GM12878 (cell line): ENCODE measurements at regions of chr3 and their contacts with region 1.

Region 1: GRCh38 chr3:12193485-12194165 is 34.9 kb upstream of the TIMP4 start:
- DNase-seq: peak; percentile 75
- ATAC-seq: peak; percentile 83
- H3K4me3 ChIP-seq: no peak overlapping the region
- H3K27ac ChIP-seq: peak overlapping the region; percentile 79
- H3K4me1 ChIP-seq: peaks cover 48% of the 10 kb centered on the region
- H3K27me3 ChIP-seq: no peaks in the 10 kb centered on the region
- CTCF ChIP-seq: no peak
- EP300 ChIP-seq: peak; percentile 85 to 91
- POLR2A ChIP-seq: no peak
- RAD21 ChIP-seq: no peak

Region 2: DNA sequence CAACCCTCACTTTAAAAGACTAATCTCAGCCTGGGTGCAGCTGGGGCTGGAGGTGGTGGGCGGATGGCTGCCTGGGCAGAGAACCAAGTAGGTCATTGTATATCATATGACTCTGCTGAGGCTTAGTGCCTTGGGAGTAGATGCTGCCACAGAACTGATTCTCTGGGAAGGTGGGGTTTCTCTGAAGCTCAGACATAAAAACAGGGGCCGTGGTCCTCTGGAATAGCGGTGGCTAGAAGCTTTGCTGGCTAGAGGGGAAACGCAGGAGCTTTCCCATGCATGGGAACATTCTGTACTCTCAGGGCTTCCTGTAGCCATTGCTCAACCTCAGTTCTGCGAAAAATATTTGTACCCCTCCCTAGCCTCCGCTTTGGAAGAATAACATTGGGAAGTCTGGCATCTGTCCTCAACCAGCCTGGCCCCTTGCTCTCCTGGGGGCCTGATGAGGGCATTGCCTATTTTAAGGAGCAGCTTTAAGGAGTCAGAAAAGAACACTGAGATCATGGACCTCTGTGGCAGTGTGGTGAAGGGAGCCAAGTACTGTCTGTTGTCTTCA is 49.6 kb before region 1 on chr3:
- CTCF ChIA-PET with region 1: interaction called, 86 read pairs
- POLR2A ChIA-PET with region 1: no interaction called
- RAD21 ChIA-PET with region 1: interaction called, 16 read pairs
- SMC1A ChIA-PET with region 1: interaction called, 76 read pairs
- in situ Hi-C with region 1: no loop called
- intact Hi-C with region 1: loop called (anchors 2 kb)
- DNase-seq: no peak
- ATAC-seq: no peak
- H3K4me3 ChIP-seq: no peak overlapping the region
- H3K27ac ChIP-seq: no peak overlapping the region
- H3K4me1 ChIP-seq: peaks cover 11% of the 10 kb centered on the region
- H3K27me3 ChIP-seq: no peaks in the 10 kb centered on the region; a peak in 1 of 4 replicates
- CTCF ChIP-seq: no peak
- EP300 ChIP-seq: no peak
- POLR2A ChIP-seq: no peak
- RAD21 ChIP-seq: no peak

Region 3: DNA sequence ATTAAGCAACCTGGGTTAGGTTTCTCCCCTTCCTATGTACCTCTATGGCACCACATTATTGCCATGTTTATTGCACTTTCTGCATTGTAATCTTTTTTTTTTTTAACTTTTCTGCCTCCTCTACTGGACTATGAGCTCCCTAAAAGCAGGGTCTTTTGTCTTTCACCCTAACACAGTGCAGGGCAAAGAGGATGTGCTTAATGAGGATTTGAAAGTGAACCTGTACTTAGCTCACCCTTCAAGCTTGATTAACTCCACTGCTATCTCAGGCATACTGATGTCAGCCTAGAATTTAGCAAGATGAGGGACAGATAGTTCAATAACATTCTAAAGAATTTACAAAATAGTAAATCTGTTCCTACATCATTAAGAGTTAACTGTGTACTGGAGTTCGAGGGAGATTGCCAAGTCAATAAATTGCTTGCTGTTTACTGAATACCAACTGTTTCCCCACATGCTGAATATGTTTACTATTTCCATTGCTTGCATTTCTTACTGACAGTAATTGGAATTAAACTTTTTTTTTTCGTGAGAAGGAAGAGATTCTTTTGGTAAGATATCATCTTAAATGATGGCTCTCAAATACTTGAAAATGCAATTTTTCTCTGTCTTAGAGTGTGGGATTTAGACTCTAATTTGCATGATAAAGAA is 79.5 kb after region 1 on chr3:
- CTCF ChIA-PET with region 1: interaction called, 11 read pairs
- POLR2A ChIA-PET with region 1: no interaction called
- RAD21 ChIA-PET with region 1: no interaction called
- SMC1A ChIA-PET with region 1: interaction called, 10 read pairs
- in situ Hi-C with region 1: no loop called
- intact Hi-C with region 1: loop called (anchors 5 kb)
- DNase-seq: peak; percentile 40
- ATAC-seq: peak; percentile 100
- H3K4me3 ChIP-seq: no peak overlapping the region
- H3K27ac ChIP-seq: no peak overlapping the region
- H3K4me1 ChIP-seq: no peaks in the 10 kb centered on the region
- H3K27me3 ChIP-seq: no peaks in the 10 kb centered on the region
- CTCF ChIP-seq: no peak
- EP300 ChIP-seq: peak in 1 of 2 experiments; percentile 56; a peak in 1 of 4 replicates
- POLR2A ChIP-seq: no peak
- RAD21 ChIP-seq: no peak

Region 4: DNA sequence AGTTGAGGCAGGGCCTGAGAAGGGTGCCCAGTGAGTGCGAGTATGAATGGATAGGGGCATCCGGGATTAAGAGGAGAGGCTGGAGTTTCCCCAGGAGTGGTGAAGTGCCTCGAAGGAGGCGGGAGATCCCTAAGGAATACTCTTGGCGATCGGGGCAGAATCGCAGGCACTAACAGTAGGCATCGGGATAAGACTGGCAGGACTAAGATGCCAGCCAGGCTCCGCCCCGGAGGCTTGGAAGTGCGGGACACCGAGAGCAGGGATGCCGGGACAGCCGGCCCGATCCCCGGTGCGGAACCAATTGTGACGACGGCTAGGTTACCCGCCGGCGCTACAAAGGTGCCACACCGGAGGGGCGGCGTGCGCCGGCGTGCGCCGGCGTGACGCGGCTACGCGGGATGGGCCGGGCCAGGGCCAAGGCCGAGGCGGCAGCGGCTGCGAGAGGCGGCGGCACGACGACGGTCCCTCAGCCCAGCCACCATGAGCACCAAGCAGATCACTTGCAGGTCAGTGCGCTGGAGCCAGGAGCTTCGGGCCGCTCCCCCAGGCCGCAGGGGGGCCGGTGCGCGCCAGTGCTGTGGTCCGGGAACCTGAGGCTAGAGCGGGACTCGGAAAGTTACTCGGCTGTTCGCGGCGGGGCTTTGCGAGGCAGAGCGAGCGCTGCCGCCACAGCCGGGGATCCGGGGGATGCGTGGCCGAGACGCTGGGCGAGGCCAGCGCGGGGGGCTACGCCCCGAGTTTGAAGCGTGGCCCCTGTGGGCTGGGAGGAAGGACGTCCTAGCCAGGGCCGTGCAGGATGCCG is 363.2 kb after region 1 on chr3 and contains the start of gene MKRN2:
- CTCF ChIA-PET with region 1: no interaction called
- POLR2A ChIA-PET with region 1: no interaction called
- RAD21 ChIA-PET with region 1: no interaction called
- SMC1A ChIA-PET with region 1: interaction called, 3 read pairs
- in situ Hi-C with region 1: no loop called
- intact Hi-C with region 1: loop called (anchors 5 kb)
- DNase-seq: peak; percentile 33
- ATAC-seq: peak; percentile 89
- H3K4me3 ChIP-seq: peak within 1 kb of the TSS; percentile 95
- H3K27ac ChIP-seq: peak within 1 kb of the TSS; percentile 89
- H3K4me1 ChIP-seq: peaks cover 22% of the 10 kb centered on the region
- H3K27me3 ChIP-seq: no peaks in the 10 kb centered on the region
- CTCF ChIP-seq: no peak
- EP300 ChIP-seq: no peak
- POLR2A ChIP-seq: peak; percentile 99
- RAD21 ChIP-seq: no peak
- polyA plus RNA-seq, gene MKRN2: 15.4 to 21.8 TPM

Region 5: DNA sequence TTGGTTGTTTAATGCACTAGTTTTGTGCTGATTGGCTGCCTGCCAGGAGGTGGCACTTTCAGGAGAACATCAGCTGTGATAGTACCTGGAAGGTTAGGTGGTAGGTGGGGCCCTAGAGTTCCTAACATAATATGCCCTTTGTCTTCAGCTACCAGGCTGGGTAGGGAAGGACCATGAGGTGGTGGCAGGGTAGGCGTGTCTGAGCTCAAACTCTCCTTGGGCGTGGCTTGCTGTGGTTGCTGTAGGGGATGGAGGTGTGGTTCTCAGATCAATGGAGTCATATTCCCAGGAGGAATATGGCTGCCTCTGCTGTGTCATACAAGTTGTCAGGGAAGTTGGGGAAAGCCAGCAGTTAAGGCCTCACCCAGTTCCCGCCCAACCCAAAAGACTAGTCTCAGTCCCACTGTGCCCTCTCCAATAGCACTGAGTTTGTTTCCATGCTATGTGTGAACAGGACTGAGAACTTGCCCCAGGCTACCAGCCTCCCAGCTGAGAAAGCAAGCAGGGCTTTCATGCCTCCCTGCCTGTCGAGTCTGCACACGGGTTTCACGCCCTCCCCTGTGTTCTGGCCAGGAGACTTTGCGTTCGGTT is 1823.4 kb after region 1 on chr3:
- CTCF ChIA-PET with region 1: no interaction called
- POLR2A ChIA-PET with region 1: no interaction called
- RAD21 ChIA-PET with region 1: no interaction called
- SMC1A ChIA-PET with region 1: no interaction called
- in situ Hi-C with region 1: no loop called
- intact Hi-C with region 1: no loop called
- DNase-seq: no peak
- ATAC-seq: no peak
- H3K4me3 ChIP-seq: no peak overlapping the region
- H3K27ac ChIP-seq: no peak overlapping the region
- H3K4me1 ChIP-seq: no peaks in the 10 kb centered on the region
- H3K27me3 ChIP-seq: no peaks in the 10 kb centered on the region
- CTCF ChIP-seq: no peak
- EP300 ChIP-seq: no peak
- POLR2A ChIP-seq: no peak
- RAD21 ChIP-seq: no peak